Dendritic cell treated with granulocyte-macrophage colony-stimulating factor and Interleukin-4, amounts not matched to agents 40 ng/mL and 50 ng/mL, for 4 days (primary cell): ENCODE measurements at regions of chr17 and their contacts with region 1.

Region 1: DNA sequence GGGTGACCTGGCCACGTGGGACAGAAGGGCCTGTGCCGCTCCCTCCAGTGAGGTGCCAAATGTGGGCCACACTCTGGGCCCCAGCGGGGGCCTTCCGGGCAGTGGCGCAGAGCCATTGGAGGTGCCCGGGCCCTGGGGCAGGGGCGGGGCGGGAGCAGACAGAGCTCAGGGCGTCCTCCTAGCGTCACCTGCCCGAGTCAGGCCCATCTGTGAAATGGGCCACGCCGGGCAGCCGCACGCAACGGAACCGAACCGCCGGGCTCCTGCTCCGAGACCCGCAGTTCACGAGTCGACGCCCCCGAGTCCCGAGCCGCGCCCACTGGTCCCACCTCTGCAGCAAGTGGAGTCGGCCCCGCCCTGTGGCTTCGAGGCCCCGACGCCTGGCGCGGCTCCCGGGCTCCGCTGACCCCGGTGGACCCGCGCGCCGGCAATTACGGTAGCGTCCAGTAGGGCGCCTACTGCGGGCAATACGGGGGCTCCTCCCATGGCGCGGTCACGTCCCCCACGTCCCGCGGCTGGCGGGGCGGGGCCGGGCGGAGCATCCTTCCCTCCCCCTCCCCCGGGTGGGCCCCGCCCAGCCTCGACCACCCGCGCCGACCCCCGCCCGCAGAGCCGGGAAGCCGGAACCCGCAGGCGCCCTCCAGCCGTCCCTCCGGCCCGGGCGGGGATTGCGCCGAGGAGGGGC is 1.9 kb downstream of the SLC16A3 start:
- H3K4me3 Mint-ChIP-seq: peak overlapping the region; percentile 99
- H3K27ac Mint-ChIP-seq: peak overlapping the region; percentile 92
- H3K4me1 Mint-ChIP-seq: peaks cover 60% of the 10 kb centered on the region
- H3K27me3 Mint-ChIP-seq: no peaks in the 10 kb centered on the region

Region 2: GRCh38 chr17:82205719-82206508 is 24.9 kb before region 1 on chr17:
- intact Hi-C with region 1: loop called (anchors 2 kb)
- H3K4me3 Mint-ChIP-seq: no peak overlapping the region
- H3K27ac Mint-ChIP-seq: peak overlapping the region; percentile 74
- H3K4me1 Mint-ChIP-seq: peaks cover 25% of the 10 kb centered on the region
- H3K27me3 Mint-ChIP-seq: no peaks in the 10 kb centered on the region

Region 3: GRCh38 chr17:82213251-82214021 is 17.3 kb before region 1 on chr17:
- intact Hi-C with region 1: loop called (anchors 2 kb)
- H3K4me3 Mint-ChIP-seq: peak overlapping the region; percentile 79
- H3K27ac Mint-ChIP-seq: peak overlapping the region; percentile 97
- H3K4me1 Mint-ChIP-seq: peaks cover 64% of the 10 kb centered on the region
- H3K27me3 Mint-ChIP-seq: no peaks in the 10 kb centered on the region

Region 4: GRCh38 chr17:82292251-82293154 is 61.7 kb after region 1 on chr17:
- intact Hi-C with region 1: loop called (anchors 10 kb)
- H3K4me3 Mint-ChIP-seq: peak overlapping the region; percentile 83
- H3K27ac Mint-ChIP-seq: peak overlapping the region; percentile 91
- H3K4me1 Mint-ChIP-seq: peaks cover 48% of the 10 kb centered on the region
- H3K27me3 Mint-ChIP-seq: peaks cover 16% of the 10 kb centered on the region